ENCODE measurements at regions of chr11 and their contacts with region 1.

Region 1: GRCh38 chr11:127567237-127567932 is 566.8 kb upstream of the KIRREL3 start:
- DNase-seq: no peak
- ATAC-seq: no peak
- H3K4me3 ChIP-seq: no peak overlapping the region
- H3K27ac ChIP-seq: no peak overlapping the region
- H3K4me1 ChIP-seq: no peaks in the 10 kb centered on the region
- H3K27me3 ChIP-seq: no peaks in the 10 kb centered on the region
- CTCF ChIP-seq: no peak

Region 2: DNA sequence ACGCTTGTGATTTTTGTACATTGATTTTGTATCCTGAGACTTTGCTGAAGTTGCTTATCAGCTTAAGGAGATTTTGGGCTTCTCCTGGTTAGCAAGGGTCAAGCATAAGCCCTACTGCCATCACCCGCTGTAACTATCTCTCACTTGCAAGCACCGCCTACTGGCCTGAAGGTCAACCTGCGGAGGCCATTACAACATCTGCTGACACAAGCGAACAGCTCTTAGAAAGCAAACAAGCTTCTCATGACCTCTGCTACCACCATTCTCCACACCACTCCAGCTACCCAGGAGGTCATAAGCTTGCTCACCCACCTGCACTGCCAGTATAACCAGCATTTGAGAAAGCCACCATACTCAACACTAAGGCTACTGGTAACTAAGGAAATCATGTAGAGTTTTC is 278.5 kb before region 1 on chr11:
- CTCF ChIA-PET with region 1: interaction called, 10 read pairs
- POLR2A ChIA-PET with region 1: no interaction called
- intact Hi-C with region 1: no loop called
- DNase-seq: no peak
- ATAC-seq: no peak
- H3K4me3 ChIP-seq: no peak overlapping the region
- H3K27ac ChIP-seq: no peak overlapping the region
- H3K4me1 ChIP-seq: no peaks in the 10 kb centered on the region
- H3K27me3 ChIP-seq: no peaks in the 10 kb centered on the region
- CTCF ChIP-seq: no peak

Measured in PC-3 (cell line).